Lower leg skin (tissue), 4 donors: ENCODE measurements at regions of chr17 and their contacts with region 1.

Region 1: GRCh38 chr17:35904281-35904680 is 24.1 kb upstream of the CCL5 start:
- DNase-seq: no peak
- H3K4me3 ChIP-seq: no peak overlapping the region
- CTCF ChIP-seq: no peak
- POLR2A ChIP-seq: no peak

Region 2: GRCh38 chr17:35875072-35875799 is 29.0 kb before region 1 on chr17:
- intact Hi-C with region 1: loop called (anchors 2 kb)
- DNase-seq: no peak
- H3K4me3 ChIP-seq: no peak overlapping the region
- CTCF ChIP-seq: no peak
- POLR2A ChIP-seq: no peak